Gastrocnemius medialis (tissue), 4 donors: ENCODE measurements at regions of chr19 and their contacts with region 1.

Region 1: DNA sequence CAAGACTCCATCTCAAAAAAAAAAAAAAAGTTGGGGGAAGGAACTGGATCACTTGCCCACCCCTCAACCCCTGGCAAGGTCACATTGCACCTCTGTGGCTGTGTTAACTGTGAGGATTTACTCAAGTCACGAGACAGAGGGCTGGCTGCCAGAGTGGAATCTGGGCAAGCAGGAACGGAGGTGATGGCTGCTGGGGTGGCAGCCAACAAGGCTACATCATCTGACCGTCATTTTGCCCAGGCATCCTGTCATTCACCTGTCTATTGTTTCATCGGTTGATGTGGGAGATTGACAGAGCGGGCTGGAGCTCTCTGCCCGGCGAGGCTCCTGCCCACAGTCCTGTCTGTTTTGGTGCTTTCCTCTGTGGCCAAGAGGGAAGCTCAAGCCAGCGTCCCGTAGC is 75.7 kb downstream of the DPF1 start:
- DNase-seq: peak; percentile 27 to 75
- ATAC-seq: peak; percentile 51 to 61
- H3K4me3 ChIP-seq: no peak overlapping the region
- H3K27ac ChIP-seq: peak overlapping the region in 3 of 4 donors; percentile 27 to 64 (median 49)
- H3K4me1 ChIP-seq: peaks cover 0 to 11% of the 10 kb centered on the region in 2 donors
- H3K27me3 ChIP-seq: no peaks in the 10 kb centered on the region
- CTCF ChIP-seq: no peak
- POLR2A ChIP-seq: peak in 1 of 2 donors; percentile 38

Region 2: DNA sequence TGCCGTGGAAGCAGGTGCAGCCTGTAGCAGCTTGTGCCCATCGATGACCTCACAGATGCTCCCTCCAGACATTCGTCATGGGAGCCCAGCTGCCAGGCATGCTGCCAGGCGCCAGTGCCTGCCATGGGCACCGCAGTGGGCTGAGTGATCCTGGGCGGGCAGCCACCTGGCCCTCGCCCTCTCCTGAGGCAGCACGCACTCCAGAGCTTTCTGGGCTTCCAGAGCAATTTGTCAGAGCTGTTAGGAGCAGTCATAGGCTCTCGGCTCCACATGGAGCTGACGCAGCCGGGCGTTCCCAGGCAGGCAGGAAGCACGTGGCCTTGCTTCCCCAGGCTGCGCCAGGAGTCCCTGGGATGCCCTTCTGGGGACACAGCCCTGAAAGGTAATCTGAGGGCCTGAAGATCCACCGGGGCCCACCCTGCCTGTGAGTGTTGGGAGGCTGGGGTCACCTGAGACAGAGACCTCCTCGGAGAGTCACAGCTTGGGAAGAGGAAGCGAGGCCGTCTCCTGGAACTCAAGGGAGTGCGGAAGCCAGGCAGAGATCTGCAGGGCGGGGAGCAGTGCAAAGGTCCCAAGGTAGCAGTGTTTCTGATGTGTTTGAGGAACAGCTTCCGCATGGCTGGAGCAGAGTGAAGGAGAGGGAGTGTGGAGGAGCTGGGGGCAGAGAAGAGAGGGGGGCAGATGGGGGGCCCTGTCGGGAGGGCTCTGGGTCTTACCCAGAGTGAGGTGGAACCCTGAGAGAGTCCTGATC is 25.1 kb after region 1 on chr19:
- in situ Hi-C with region 1: no loop called
- intact Hi-C with region 1: loop called (anchors 1 kb)
- DNase-seq: peak; percentile 88 to 98
- ATAC-seq: peak; percentile 92 to 95
- H3K4me3 ChIP-seq: peak overlapping the region; percentile 20 to 46 (median 39)
- H3K27ac ChIP-seq: peak overlapping the region; percentile 90 to 96 (median 93)
- H3K4me1 ChIP-seq: peaks cover 18 to 19% of the 10 kb centered on the region in 2 donors
- H3K27me3 ChIP-seq: no peaks in the 10 kb centered on the region
- CTCF ChIP-seq: no peak
- POLR2A ChIP-seq: peak; percentile 48 to 65

Region 3: DNA sequence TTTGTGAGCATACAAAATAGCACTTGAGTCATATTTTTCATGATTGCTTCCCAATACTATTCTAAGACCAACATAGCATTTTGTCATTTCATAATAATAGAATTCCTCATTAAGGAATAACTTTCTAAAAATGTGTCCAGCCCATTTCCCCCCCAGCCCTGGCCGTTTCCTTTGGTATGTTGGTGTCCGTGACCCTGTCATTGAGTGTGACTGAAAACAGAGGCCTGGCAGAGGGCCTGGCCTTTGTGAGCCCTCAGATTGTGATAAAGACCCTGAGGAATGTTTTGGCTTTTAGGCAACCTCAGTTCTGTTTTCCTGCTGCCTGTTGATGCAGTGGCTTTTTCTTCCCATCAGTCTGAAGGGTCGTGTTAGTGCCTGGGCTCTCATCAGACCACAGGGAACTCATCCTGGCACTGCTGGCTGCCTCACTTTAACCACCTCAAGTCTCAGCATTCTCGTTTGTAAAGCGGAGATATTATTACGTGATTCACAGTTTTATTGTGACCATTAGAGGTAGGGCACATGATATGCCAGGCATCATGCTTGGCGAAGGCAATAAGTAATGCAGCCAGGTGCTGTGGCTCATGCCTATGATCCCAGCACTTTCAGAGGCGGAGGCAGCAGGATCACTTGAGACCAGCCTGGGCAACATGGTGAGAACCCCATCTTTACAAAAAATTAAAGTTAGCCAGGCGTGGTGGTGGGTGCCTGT is 129.8 kb after region 1 on chr19:
- in situ Hi-C with region 1: no loop called
- intact Hi-C with region 1: no loop called
- DNase-seq: no peak
- ATAC-seq: peak; percentile 62 to 68
- H3K4me3 ChIP-seq: no peak overlapping the region
- H3K27ac ChIP-seq: peak overlapping the region; percentile 42 to 69 (median 62)
- H3K4me1 ChIP-seq: peaks cover 0 to 5% of the 10 kb centered on the region in 2 donors
- H3K27me3 ChIP-seq: no peaks in the 10 kb centered on the region
- CTCF ChIP-seq: no peak
- POLR2A ChIP-seq: no peak